Adrenal gland (tissue), 19 donors: ENCODE measurements at regions of chr2 and their contacts with region 1.

Region 1: DNA sequence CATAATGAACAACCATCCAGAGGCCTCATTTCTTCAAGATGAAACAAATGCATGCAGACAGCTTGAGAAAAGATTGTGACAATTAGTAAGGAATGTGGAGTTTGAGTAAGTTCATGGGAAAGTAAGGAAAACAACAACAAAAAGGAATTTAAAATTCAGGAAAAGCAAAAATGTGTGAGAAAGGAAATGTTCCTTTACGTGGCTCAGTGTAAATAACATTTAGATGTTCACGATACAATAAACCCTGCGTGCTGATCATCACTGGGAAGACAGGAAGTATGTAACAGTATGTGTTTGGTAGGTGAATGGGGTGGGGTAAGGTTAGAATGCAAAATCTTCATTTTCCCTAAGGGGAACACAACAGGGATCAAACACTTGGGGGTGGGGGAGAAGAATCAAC is 72.7 kb downstream of the TRIP12 start:
- DNase-seq: no peak
- H3K4me3 ChIP-seq: no peak overlapping the region
- H3K27ac ChIP-seq: no peak overlapping the region
- H3K4me1 ChIP-seq: peaks cover 8 to 32% of the 10 kb centered on the region in 2 donors
- H3K27me3 ChIP-seq: no peaks in the 10 kb centered on the region
- CTCF ChIP-seq: no peak
- POLR2A ChIP-seq: no peak

Region 2: DNA sequence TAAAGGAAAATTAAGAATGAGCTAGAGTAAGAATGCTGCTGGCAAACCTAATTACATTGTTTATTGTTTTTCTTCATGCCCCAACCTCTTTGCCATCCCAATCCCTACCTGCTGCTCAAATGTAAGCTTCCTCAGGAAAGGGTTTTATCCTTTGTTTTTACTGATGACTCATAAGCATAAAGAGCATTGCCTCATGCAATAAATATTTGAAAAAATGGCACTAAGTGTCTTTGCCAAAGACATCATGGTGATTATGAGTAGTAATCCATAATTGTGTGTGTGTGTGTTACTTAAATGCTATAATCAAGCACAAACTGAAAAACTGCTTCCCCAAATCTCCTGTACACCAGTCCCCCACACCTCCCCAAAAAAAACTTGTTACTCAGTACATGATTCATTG is 188.1 kb before region 1 on chr2:
- intact Hi-C with region 1: no loop called
- DNase-seq: no peak
- H3K4me3 ChIP-seq: no peak overlapping the region
- H3K27ac ChIP-seq: no peak overlapping the region
- H3K4me1 ChIP-seq: peaks cover 0 to 15% of the 10 kb centered on the region in 2 donors
- H3K27me3 ChIP-seq: no peaks in the 10 kb centered on the region
- CTCF ChIP-seq: no peak
- POLR2A ChIP-seq: no peak

Region 3: GRCh38 chr2:229910832-229911412 is 61.8 kb after region 1 on chr2:
- intact Hi-C with region 1: loop called in 1 of 2 experiments (anchors 10 kb)
- DNase-seq: no peak
- H3K4me3 ChIP-seq: no peak overlapping the region
- H3K27ac ChIP-seq: no peak overlapping the region
- H3K4me1 ChIP-seq: peaks cover 33 to 74% of the 10 kb centered on the region in 2 donors
- H3K27me3 ChIP-seq: no peaks in the 10 kb centered on the region
- CTCF ChIP-seq: no peak
- POLR2A ChIP-seq: no peak